Naive thymus-derived CD4-positive, alpha-beta T cell (primary cell): ENCODE measurements at regions of chr1 and their contacts with region 1.

Region 1: DNA sequence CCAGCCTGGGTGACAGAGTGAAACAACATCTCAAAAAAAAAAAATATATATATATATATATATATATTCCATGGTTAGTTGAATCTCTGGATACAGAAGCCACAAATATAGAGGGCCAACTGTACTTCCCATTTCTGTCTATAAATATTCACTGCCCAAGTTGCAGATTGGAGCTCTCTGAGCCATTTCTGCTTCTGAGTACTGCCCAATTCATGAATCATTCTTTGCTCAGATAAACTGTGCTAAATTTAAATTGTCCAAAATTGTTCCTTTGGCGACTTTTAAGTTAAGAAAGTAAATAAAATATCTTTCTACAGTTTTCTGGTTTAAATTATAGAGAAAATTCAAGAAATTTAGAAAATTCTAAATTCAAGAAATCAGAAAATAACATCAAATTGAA is 23.2 kb upstream of the C1orf146 start:
- DNase-seq: no peak
- ATAC-seq: peak; percentile 31
- H3K4me3 ChIP-seq: no peak overlapping the region
- H3K4me3 Mint-ChIP-seq: no peak overlapping the region
- H3K27ac ChIP-seq: no peak overlapping the region
- H3K27ac Mint-ChIP-seq: no peak overlapping the region
- H3K4me1 ChIP-seq: no peaks in the 10 kb centered on the region
- H3K4me1 Mint-ChIP-seq: no peaks in the 10 kb centered on the region
- H3K27me3 ChIP-seq: no peaks in the 10 kb centered on the region
- H3K27me3 Mint-ChIP-seq: peaks cover 0 to 6% (median 0%) of the 10 kb centered on the region in 5 donors

Region 2: DNA sequence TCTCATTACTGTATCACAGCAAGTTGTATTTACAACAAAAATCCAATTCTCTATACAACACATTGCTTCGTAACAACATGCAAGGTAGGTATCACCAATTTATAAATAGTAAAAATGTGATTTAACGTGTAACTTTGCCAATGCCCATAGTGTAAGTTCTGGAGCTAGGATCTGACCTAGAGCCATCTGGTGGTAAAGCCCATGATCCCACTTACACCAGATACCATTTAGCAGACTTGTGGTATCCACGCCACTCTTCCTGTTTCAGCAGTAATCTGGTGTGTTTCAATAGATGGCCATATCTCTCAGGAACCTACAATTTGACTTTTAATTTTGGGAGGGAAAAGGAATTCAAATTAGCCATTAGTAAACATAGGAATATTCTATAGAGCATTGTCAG is 129.5 kb before region 1 on chr1:
- CTCF ChIA-PET with region 1: no interaction called
- POLR2A ChIA-PET with region 1: no interaction called
- intact Hi-C with region 1: no loop called
- DNase-seq: no peak
- ATAC-seq: no peak
- H3K4me3 ChIP-seq: no peak overlapping the region
- H3K4me3 Mint-ChIP-seq: no peak overlapping the region
- H3K27ac ChIP-seq: no peak overlapping the region
- H3K27ac Mint-ChIP-seq: no peak overlapping the region
- H3K4me1 ChIP-seq: no peaks in the 10 kb centered on the region
- H3K4me1 Mint-ChIP-seq: no peaks in the 10 kb centered on the region
- H3K27me3 ChIP-seq: no peaks in the 10 kb centered on the region
- H3K27me3 Mint-ChIP-seq: no peaks in the 10 kb centered on the region

Region 3: GRCh38 chr1:92259350-92259749 is 64.8 kb after region 1 on chr1:
- CTCF ChIA-PET with region 1: no interaction called
- POLR2A ChIA-PET with region 1: no interaction called
- intact Hi-C with region 1: loop called in 1 of 2 experiments (anchors 10 kb)
- DNase-seq: no peak
- ATAC-seq: no peak
- H3K4me3 ChIP-seq: no peak overlapping the region
- H3K4me3 Mint-ChIP-seq: no peak overlapping the region
- H3K27ac ChIP-seq: no peak overlapping the region
- H3K27ac Mint-ChIP-seq: no peak overlapping the region
- H3K4me1 ChIP-seq: no peaks in the 10 kb centered on the region
- H3K4me1 Mint-ChIP-seq: peaks cover 0 to 8% (median 0%) of the 10 kb centered on the region in 7 donors
- H3K27me3 ChIP-seq: no peaks in the 10 kb centered on the region
- H3K27me3 Mint-ChIP-seq: no peaks in the 10 kb centered on the region